ENCODE measurements at regions of chr7 and their contacts with region 1.

Region 1: DNA sequence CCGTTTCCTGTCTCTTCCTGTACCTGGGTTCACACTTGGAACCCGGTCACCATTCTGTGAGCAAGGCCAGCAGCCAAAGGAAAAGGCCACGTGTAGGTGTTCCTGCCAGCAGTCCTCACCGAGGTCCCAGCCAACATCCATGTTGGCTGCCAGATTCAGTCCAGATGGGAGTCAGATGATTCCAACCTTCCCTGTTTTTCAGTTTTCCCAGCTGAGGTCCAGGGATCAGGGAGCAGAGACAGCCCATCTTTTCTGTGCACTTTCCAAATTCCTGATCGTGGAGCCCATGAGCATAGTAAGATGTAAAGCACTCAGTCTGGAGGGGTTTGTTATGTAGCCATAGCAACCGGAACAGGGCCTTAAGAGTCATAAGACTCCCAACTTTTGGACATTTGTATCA is 3.9 kb upstream of the PVRIG start:
- DNase-seq: no peak
- ATAC-seq: no peak
- H3K4me3 ChIP-seq: no peak overlapping the region
- H3K4me3 Mint-ChIP-seq: no peak overlapping the region
- H3K27ac ChIP-seq: no peak overlapping the region
- H3K27ac Mint-ChIP-seq: peak overlapping the region; percentile 40
- H3K4me1 ChIP-seq: peaks cover 52% of the 10 kb centered on the region
- H3K4me1 Mint-ChIP-seq: peaks cover 55% of the 10 kb centered on the region
- H3K27me3 ChIP-seq: no peaks in the 10 kb centered on the region
- H3K27me3 Mint-ChIP-seq: no peaks in the 10 kb centered on the region
- CTCF ChIP-seq: no peak

Region 2: GRCh38 chr7:98993024-98993897 is 1222.6 kb before region 1 on chr7:
- CTCF ChIA-PET with region 1: no interaction called
- POLR2A ChIA-PET with region 1: no interaction called
- intact Hi-C with region 1: no loop called
- DNase-seq: no peak
- ATAC-seq: no peak
- H3K4me3 ChIP-seq: no peak overlapping the region
- H3K4me3 Mint-ChIP-seq: no peak overlapping the region
- H3K27ac ChIP-seq: no peak overlapping the region
- H3K27ac Mint-ChIP-seq: no peak overlapping the region
- H3K4me1 ChIP-seq: no peaks in the 10 kb centered on the region
- H3K4me1 Mint-ChIP-seq: peaks cover 5% of the 10 kb centered on the region
- H3K27me3 ChIP-seq: no peaks in the 10 kb centered on the region
- H3K27me3 Mint-ChIP-seq: no peaks in the 10 kb centered on the region
- CTCF ChIP-seq: no peak

Region 3: DNA sequence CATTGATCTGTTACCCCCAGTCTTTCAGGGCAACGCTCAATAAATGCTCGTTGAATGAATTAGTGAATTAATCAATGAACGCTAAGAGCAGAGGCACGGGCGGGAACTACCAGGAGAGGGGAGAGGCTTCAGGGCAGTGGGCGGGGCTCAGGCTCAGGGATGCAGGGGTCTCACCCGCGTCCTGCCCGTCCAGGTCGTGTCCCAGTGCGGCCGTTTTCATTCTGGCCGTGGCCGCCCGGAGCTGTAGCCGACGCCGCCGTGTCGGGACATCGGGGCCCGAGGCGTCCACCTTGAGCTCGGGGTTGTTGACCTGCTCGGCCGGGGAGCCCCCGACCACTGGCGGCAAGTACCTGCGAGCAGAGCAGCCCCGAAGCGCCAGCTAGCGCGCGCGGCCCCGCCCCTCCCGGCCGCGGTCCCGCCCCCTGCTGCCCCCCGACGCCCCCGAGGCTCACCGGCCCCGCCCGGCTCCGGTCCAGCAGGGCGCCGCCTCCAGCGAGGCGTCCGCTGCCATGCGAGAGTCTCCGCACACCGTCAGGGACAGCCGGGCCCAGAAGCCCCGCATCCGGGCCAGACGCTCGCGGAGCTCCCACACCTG is 44.7 kb before region 1 on chr7:
- CTCF ChIA-PET with region 1: interaction called, 4 read pairs
- POLR2A ChIA-PET with region 1: interaction called, 14 read pairs
- intact Hi-C with region 1: loop called in 1 of 2 experiments (anchors 10 kb)
- DNase-seq: peak in 6 of 14 experiments; percentile 25 to 69 (median 56)
- ATAC-seq: peak; percentile 22
- H3K4me3 ChIP-seq: peak overlapping the region; percentile 52
- H3K4me3 Mint-ChIP-seq: peak overlapping the region; percentile 85
- H3K27ac ChIP-seq: peak overlapping the region in 1 of 2 donors; percentile 50
- H3K27ac Mint-ChIP-seq: peak overlapping the region; percentile 91
- H3K4me1 ChIP-seq: peaks cover 65% of the 10 kb centered on the region
- H3K4me1 Mint-ChIP-seq: peaks cover 62% of the 10 kb centered on the region
- H3K27me3 ChIP-seq: peaks cover 0 to 3% of the 10 kb centered on the region in 2 experiments
- H3K27me3 Mint-ChIP-seq: no peaks in the 10 kb centered on the region
- CTCF ChIP-seq: no peak

Region 4: GRCh38 chr7:100195222-100195621 is 20.7 kb before region 1 on chr7:
- CTCF ChIA-PET with region 1: interaction called, 6 read pairs
- POLR2A ChIA-PET with region 1: interaction called, 6 read pairs
- intact Hi-C with region 1: loop called (anchors 1 kb)
- DNase-seq: no peak
- ATAC-seq: no peak
- H3K4me3 ChIP-seq: no peak overlapping the region
- H3K4me3 Mint-ChIP-seq: no peak overlapping the region
- H3K27ac ChIP-seq: no peak overlapping the region
- H3K27ac Mint-ChIP-seq: no peak overlapping the region
- H3K4me1 ChIP-seq: peaks cover 2% of the 10 kb centered on the region
- H3K4me1 Mint-ChIP-seq: peaks cover 40% of the 10 kb centered on the region
- H3K27me3 ChIP-seq: no peaks in the 10 kb centered on the region
- H3K27me3 Mint-ChIP-seq: no peaks in the 10 kb centered on the region
- CTCF ChIP-seq: no peak

Measured in CD4-positive, alpha-beta T cell (primary cell).